ENCODE measurements at regions of chr11 and their contacts with region 1.

Region 1: GRCh38 chr11:118051611-118052461 is 25.0 kb upstream of the TMPRSS4 start:
- DNase-seq: no peak
- H3K4me3 ChIP-seq: no peak overlapping the region
- H3K27ac ChIP-seq: peak overlapping the region in 1 of 4 donors; percentile 17
- H3K4me1 ChIP-seq: peaks cover 0 to 20% (median 0%) of the 10 kb centered on the region in 3 donors
- H3K27me3 ChIP-seq: peaks cover 0 to 31% (median 0%) of the 10 kb centered on the region in 4 donors
- CTCF ChIP-seq: no peak
- POLR2A ChIP-seq: no peak

Region 2: DNA sequence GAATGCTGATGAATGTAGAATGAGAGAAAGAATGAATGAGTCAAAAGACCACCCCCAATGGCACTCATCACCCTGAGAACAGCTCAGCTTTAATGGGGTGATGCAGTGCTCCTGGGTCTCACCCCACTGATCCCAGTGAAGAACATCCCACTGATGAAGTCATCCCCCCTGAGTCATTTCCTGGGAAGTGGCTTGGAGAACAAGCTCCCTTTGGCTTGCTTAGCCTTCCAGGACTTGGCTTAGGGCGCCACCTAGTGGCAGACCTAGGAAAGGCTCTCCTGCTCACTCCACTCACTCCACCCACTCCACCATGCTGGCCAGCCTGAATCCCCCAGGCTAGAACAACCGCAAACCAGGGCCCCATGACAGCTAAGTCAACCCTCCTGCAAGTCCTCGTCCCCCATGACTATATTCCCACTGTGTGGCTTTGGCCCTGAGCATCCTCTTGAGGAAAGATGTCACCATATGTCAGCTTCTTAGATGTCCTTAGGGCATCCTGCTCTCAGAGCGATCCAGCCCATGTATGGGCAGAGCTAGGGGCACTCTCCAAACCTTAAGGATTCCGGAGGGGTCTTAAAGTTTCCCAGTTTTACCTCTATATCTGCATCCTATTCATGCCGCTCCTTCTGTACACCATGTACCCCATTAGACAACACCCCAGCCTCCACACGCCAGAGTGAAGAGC is 104.9 kb before region 1 on chr11:
- intact Hi-C with region 1: loop called (anchors 5 kb)
- DNase-seq: no peak
- H3K4me3 ChIP-seq: no peak overlapping the region
- H3K27ac ChIP-seq: no peak overlapping the region
- H3K4me1 ChIP-seq: peaks cover 0 to 22% (median 0%) of the 10 kb centered on the region in 3 donors
- H3K27me3 ChIP-seq: peaks cover 0 to 20% (median 0%) of the 10 kb centered on the region in 4 donors
- CTCF ChIP-seq: peak; percentile 95 to 99 (median 98)
- POLR2A ChIP-seq: no peak